Mammary epithelial cell (primary cell): ENCODE measurements at regions of chr2 and their contacts with region 1.

Region 1: DNA sequence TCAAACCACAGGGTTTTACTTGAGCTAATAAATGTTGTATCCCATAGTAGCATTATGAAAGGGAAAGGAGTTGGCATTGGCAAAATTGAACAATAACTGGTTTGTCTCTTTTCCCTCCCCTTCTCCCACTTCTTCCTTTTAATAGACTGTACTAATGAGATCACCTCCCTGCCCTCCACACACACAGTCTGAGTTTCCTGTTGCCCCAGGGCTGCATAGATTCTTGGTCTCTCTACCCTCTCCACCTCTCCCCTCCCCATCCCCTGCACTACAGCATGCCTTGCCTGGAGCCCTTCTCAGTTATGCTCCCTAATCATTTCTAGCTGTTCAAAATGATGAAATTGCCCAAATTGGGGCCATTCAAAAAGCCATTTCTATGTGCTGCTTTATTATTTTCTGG is 37.2 kb upstream of the NEMP2 start:
- DNase-seq: peak; percentile 90
- H3K4me3 ChIP-seq: no peak overlapping the region
- H3K27ac ChIP-seq: peak overlapping the region; percentile 72
- H3K4me1 ChIP-seq: peaks cover 43% of the 10 kb centered on the region
- H3K27me3 ChIP-seq: no peaks in the 10 kb centered on the region
- CTCF ChIP-seq: no peak

Region 2: DNA sequence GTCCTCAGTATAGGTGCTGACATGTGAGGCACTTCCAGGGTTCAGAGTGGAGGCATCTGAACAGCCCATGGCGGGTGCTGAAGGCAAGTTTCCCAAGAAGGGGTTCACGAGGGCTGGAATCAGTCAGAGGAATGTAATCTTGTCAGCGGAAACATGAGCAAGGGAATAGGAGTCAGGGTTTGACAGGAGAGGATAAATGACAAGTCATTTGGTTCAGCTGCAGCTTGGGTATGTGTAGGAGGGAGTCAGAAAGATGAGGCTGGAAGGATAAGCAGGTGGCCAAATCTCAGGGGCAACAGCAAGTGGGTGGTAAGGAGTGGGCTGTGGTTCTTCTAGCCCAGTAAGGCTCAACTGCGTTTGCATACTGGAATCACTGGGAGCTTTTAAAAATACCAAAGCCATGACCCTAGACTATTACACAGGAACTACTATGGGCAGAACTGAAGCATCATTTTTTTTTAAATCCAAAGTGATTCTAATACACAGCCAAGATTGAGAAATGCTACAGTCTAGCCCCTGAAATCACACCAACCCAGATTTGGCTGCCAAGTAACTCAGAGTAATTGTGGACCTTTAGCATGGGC is 35.4 kb after region 1 on chr2:
- CTCF ChIA-PET with region 1: no interaction called
- dilution Hi-C with region 1: no loop called
- in situ Hi-C with region 1: no loop called
- intact Hi-C with region 1: loop called (anchors 5 kb)
- DNase-seq: no peak
- H3K4me3 ChIP-seq: no peak overlapping the region
- H3K27ac ChIP-seq: peak overlapping the region; percentile 85
- H3K4me1 ChIP-seq: peaks cover 23% of the 10 kb centered on the region
- H3K27me3 ChIP-seq: no peaks in the 10 kb centered on the region
- CTCF ChIP-seq: no peak